IMR-90 (cell line): ENCODE measurements at regions of chr5 and their contacts with region 1.

Region 1: GRCh38 chr5:54517174-54518092 is at the start of gene SNX18:
- DNase-seq: peak; percentile 93
- ATAC-seq: peak; percentile 81
- H3K4me3 ChIP-seq: peak within 1 kb of the TSS; percentile 92
- H3K27ac ChIP-seq: peak within 1 kb of the TSS; percentile 88
- H3K4me1 ChIP-seq: peaks cover 11% of the 10 kb centered on the region
- H3K27me3 ChIP-seq: no peaks in the 10 kb centered on the region
- CTCF ChIP-seq: peak; percentile 99
- POLR2A ChIP-seq: peak; percentile 74; the same call in 1 of the 2 replicates
- RAD21 ChIP-seq: peak; percentile 100
- total RNA-seq, gene SNX18: 50.0 and 67.8 TPM in 2 replicates

Region 2: DNA sequence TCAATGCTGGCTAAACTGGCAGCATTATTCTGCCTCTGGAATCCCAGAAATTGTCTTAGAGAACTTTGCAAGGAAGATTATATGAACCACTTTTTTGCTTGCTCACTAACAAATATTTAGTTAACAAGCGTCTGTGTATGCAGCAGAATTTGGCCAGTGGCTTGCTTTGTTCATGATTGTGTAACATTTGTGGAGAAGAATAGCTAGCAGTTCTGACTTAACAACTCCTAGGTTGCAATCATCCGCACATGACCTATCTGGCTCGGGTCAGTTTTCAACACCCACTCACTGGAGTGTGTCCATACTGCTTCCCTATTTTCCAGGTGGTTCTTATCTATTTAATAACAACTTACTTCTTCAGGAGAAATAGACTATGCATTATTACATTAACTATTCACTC is 98.6 kb after region 1 on chr5:
- CTCF ChIA-PET with region 1: no interaction called
- POLR2A ChIA-PET with region 1: no interaction called
- dilution Hi-C with region 1: no loop called
- in situ Hi-C with region 1: no loop called
- intact Hi-C with region 1: loop called (anchors 2 kb)
- DNase-seq: peak; percentile 89
- ATAC-seq: peak; percentile 61
- H3K4me3 ChIP-seq: no peak overlapping the region
- H3K27ac ChIP-seq: peak overlapping the region; percentile 88; the same call in 1 of the 2 replicates
- H3K4me1 ChIP-seq: peaks cover 26% of the 10 kb centered on the region
- H3K27me3 ChIP-seq: no peaks in the 10 kb centered on the region
- CTCF ChIP-seq: no peak
- POLR2A ChIP-seq: no peak
- RAD21 ChIP-seq: no peak

Region 3: GRCh38 chr5:54703133-54703532 is 185.7 kb after region 1 on chr5:
- CTCF ChIA-PET with region 1: interaction called, 6 read pairs
- POLR2A ChIA-PET with region 1: no interaction called
- dilution Hi-C with region 1: no loop called
- in situ Hi-C with region 1: no loop called
- intact Hi-C with region 1: loop called (anchors 5 kb)
- DNase-seq: peak; percentile 93
- ATAC-seq: peak; percentile 66
- H3K4me3 ChIP-seq: peak overlapping the region; percentile 11; the same call in 1 of the 2 replicates
- H3K27ac ChIP-seq: peak overlapping the region; percentile 87; the same call in 1 of the 2 replicates
- H3K4me1 ChIP-seq: peaks cover 27% of the 10 kb centered on the region
- H3K27me3 ChIP-seq: no peaks in the 10 kb centered on the region
- CTCF ChIP-seq: no peak
- POLR2A ChIP-seq: no peak
- RAD21 ChIP-seq: peak; percentile 30

Region 4: GRCh38 chr5:54761213-54761701 is 243.8 kb after region 1 on chr5:
- CTCF ChIA-PET with region 1: interaction called, 5 read pairs
- POLR2A ChIA-PET with region 1: no interaction called
- dilution Hi-C with region 1: no loop called
- in situ Hi-C with region 1: no loop called
- intact Hi-C with region 1: loop called (anchors 1 kb)
- DNase-seq: peak; percentile 95
- ATAC-seq: peak; percentile 78
- H3K4me3 ChIP-seq: no peak overlapping the region
- H3K27ac ChIP-seq: peak overlapping the region; percentile 68; the same call in 1 of the 2 replicates
- H3K4me1 ChIP-seq: peaks cover 27% of the 10 kb centered on the region
- H3K27me3 ChIP-seq: no peaks in the 10 kb centered on the region
- CTCF ChIP-seq: no peak
- POLR2A ChIP-seq: no peak
- RAD21 ChIP-seq: no peak; the same call in 1 of the 2 replicates

Region 5: GRCh38 chr5:54861212-54861894 is 343.9 kb after region 1 on chr5:
- CTCF ChIA-PET with region 1: interaction called, 14 read pairs
- POLR2A ChIA-PET with region 1: no interaction called
- dilution Hi-C with region 1: no loop called
- in situ Hi-C with region 1: loop called (anchors 5 kb)
- intact Hi-C with region 1: no loop called
- DNase-seq: peak; percentile 67
- ATAC-seq: peak; percentile 96
- H3K4me3 ChIP-seq: no peak overlapping the region
- H3K27ac ChIP-seq: peak overlapping the region; percentile 45; the same call in 1 of the 2 replicates
- H3K4me1 ChIP-seq: peaks cover 8% of the 10 kb centered on the region
- H3K27me3 ChIP-seq: no peaks in the 10 kb centered on the region
- CTCF ChIP-seq: no peak
- POLR2A ChIP-seq: no peak
- RAD21 ChIP-seq: no peak

Region 6: GRCh38 chr5:54895816-54896341 is 378.4 kb after region 1 on chr5:
- CTCF ChIA-PET with region 1: interaction called, 3 read pairs
- POLR2A ChIA-PET with region 1: no interaction called
- dilution Hi-C with region 1: no loop called
- in situ Hi-C with region 1: no loop called
- intact Hi-C with region 1: loop called (anchors 1 kb)
- DNase-seq: peak; percentile 68
- ATAC-seq: peak; percentile 92
- H3K4me3 ChIP-seq: no peak overlapping the region
- H3K27ac ChIP-seq: no peak overlapping the region
- H3K4me1 ChIP-seq: peaks cover 5% of the 10 kb centered on the region; the same call in 1 of the 2 replicates
- H3K27me3 ChIP-seq: peaks cover 4% of the 10 kb centered on the region; the same call in 1 of the 2 replicates
- CTCF ChIP-seq: peak; percentile 72
- POLR2A ChIP-seq: no peak
- RAD21 ChIP-seq: peak; percentile 76

Region 7: GRCh38 chr5:55159763-55160492 is 642.5 kb after region 1 on chr5 and contains the start of gene GPX8:
- CTCF ChIA-PET with region 1: interaction called, 3 read pairs
- POLR2A ChIA-PET with region 1: no interaction called
- dilution Hi-C with region 1: no loop called
- in situ Hi-C with region 1: loop called (anchors 10 kb)
- intact Hi-C with region 1: no loop called
- DNase-seq: peak; percentile 92
- ATAC-seq: peak; percentile 88
- H3K4me3 ChIP-seq: peak within 1 kb of the TSS; percentile 66
- H3K27ac ChIP-seq: peak within 1 kb of the TSS; percentile 76
- H3K4me1 ChIP-seq: peaks cover 4% of the 10 kb centered on the region
- H3K27me3 ChIP-seq: no peaks in the 10 kb centered on the region
- CTCF ChIP-seq: peak; percentile 75
- POLR2A ChIP-seq: peak; percentile 77
- RAD21 ChIP-seq: peak; percentile 86
- total RNA-seq, gene GPX8: 166 and 201 TPM in 2 replicates